Right ventricle myocardium superior (tissue), 1 donor: ENCODE measurements at regions of chr11 and their contacts with region 1.

Region 1: GRCh38 chr11:28529540-28530410 is 421.6 kb downstream of the METTL15 start:
- DNase-seq: no peak
- ATAC-seq: peak; percentile 55

Region 2: DNA sequence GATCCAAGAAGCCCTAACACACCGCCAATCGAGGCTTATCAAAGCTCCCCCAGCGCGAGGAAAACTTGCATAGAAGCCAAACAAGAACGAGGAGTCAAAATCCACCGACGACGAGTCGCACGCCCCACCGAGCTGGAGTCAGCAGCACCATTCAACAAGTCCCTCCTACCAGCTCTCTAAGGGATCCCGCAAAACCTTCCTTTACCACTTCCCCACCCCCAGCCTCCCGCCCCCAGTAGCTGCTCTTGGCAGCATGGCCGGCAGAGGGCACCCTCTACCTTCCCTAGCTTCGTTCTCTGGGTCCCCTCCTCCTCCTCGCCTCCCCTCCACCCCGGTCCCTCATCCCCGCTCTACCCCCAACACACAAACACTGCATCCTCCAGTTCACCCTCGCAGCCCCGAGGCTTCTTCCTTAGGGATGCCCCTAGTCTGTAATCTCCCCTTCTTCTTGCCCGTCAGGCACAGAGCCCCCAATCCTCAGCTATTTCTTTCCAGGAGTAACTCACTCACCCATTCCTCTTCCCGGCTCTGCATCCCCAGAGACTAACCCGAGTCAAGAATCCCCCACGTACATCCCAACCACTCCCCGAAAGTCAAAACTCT is 830.8 kb before region 1 on chr11:
- intact Hi-C with region 1: loop called (anchors 5 kb)
- DNase-seq: peak; percentile 83
- ATAC-seq: peak; percentile 93

Region 3: DNA sequence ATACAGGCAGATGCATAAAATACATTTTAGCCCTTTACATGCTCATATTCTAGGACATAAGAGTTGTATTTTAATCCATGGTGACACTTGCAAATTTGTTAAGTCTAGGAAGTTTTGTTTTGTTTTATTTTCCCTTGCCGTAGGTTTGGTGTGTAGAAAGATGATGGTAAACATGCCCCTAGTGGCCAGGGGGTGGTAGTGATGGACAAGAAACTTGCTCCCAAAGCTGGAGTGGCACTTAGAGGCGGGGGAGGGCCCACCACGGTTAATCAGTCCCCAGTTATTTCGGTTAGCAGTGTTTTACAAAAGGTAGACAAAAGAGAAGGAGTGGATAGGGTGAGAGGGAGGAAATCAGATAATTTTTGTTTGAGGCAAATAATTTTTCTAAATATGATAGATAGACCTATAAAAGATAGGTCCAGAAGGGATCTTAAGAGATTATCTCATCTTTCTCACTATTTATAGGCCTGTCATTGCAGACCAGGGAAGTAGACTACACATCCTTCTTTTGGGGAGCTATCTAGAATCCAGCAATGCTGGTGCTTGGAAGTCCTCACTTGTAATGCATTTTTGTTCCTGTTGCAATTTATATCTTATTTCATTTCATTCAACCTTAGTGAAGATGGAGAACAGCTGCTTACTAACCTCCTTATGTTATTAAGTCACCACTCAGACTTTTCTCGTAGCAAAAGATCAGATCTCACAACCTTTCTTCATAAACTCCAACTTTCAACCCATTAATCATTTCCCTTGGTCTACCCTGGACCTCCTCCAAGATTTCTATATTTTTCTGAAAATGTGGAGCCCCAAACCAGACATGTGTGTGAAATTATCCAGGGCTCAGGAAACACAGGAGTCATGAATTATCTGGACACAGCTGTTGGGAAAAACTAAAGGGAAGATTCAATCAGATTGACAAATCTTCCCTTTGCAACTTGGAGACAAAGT is 823.6 kb before region 1 on chr11:
- intact Hi-C with region 1: loop called (anchors 5 kb)
- DNase-seq: no peak
- ATAC-seq: peak; percentile 54